ENCODE measurements at regions of chr4 and their contacts with region 1.

Region 1: DNA sequence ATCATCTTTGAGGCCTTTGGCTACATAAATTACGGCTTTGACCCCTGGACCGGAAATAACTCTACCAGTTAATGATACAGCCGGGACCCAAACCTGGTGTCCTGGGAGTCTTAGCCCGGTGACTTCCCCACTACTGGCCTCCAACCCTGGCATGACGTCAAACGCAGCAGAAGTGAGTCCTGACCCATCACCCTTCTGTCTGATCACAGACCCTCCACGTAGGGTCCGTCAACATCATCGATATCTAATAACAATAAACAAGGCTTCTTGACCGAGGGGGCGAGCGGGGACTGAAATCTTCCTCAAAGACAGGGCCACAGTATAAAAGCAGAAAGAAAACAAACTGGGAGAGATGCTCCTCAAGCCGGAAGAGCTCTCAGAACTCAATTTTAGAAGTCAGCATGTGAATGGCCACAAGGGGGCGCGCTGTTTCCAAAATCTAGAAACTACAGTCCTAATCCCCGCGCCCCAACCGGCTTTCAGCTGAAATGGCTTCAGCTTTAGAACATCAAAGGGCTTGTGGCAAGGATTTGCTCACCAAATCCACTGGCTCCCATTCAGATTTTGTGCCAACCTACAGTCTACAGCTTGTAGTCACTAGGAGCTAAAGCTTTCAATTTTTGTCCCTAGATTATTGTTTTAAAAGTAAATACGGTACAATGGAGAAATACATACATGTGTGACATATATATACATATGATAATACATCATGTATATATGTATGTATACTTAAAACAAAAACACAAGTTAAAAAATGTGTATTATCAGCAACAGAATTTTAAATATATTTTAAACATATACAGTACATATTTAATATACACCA is 46.4 kb upstream of the ENPP6 start:
- DNase-seq: peak; percentile 72
- CTCF ChIP-seq: peak; percentile 80

Region 2: DNA sequence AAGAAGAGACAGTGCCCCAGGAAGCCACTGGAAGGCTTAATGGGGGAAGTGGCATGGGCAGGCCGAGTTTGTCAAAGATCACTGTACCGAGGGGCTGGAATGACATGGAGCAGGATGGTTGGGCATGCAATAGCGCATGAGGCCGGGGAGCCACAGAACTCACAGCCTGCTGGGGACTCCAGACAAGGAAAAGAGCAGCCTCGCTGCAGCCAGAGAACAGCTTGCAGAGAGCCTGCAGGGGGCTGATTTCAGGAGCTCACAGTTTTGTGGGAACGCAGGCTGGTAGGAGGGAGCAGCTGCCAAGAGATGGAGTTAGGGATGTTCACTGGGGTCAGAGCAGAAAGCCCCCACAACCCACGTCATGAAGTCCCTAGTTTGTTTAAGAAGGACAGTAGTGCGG is 313.6 kb before region 1 on chr4:
- CTCF ChIA-PET with region 1: no interaction called
- POLR2A ChIA-PET with region 1: no interaction called
- DNase-seq: no peak
- CTCF ChIP-seq: no peak

Region 3: GRCh38 chr4:184039963-184040383 is 224.1 kb before region 1 on chr4:
- CTCF ChIA-PET with region 1: no interaction called
- POLR2A ChIA-PET with region 1: no interaction called
- DNase-seq: peak; percentile 27
- CTCF ChIP-seq: no peak

Region 4: DNA sequence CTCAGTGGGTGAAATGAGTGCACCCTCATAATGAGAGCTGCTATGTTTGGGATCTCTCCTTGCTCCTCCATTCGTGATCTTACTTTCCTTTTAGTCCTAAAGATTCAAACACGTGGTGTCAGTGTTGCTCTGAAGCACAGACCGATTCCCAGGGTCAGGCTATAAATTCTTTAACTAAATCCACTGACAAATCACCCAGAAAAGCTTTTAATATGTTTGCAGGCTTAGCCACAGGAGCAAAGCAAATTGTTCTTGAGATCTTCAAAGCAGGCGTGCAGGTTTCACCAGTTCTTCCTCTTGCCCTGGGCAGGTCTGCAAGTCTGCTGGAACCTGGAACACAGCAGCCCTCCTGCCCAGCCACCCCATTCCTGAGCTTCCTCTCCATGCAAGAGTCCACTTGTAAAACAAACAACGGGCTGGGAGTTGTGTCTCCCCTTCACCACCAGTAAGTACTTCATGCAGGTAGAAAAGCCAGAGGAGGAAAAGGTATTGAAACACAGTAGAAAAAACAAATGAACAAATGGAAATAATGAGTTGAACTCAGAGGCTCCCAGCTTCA is 23.7 kb after region 1 on chr4:
- CTCF ChIA-PET with region 1: interaction called, 168 read pairs
- POLR2A ChIA-PET with region 1: interaction called, 8 read pairs
- DNase-seq: no peak
- CTCF ChIP-seq: peak; percentile 12

Region 5: DNA sequence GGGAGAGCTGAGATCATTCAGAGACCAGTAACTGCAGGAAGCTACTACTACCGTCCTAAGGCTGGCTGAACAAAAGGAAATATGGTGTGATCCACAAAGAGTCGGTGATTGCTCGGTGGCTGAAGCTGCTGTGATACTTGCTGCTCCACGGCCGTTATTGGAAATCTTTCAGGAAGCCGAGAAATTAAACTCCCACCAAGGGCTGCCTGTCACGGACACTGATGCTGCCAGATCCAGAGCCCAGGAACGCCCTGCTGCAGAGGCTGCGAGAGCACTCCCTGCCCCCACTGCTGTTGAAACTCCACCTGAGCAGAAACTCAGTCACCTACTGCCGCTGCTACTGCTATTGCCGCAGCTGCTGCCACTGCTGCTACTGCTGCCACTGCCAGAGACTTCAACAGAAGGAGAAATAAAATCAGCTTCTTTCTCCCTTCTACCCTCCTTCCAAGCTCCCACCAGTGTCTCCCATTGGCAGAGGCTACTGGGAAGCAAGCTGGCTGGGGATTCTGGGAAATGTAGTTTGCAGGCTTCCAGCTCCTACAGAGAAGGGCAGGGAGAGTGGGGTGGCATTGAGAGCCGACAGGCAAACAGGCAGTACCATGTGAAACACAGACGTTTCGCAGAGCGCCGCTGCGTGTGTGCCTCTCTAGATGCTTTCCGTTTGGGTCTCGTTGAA is 79.5 kb after region 1 on chr4:
- CTCF ChIA-PET with region 1: interaction called, 13 read pairs
- POLR2A ChIA-PET with region 1: interaction called, 6 read pairs
- DNase-seq: no peak
- CTCF ChIP-seq: no peak

Region 6: DNA sequence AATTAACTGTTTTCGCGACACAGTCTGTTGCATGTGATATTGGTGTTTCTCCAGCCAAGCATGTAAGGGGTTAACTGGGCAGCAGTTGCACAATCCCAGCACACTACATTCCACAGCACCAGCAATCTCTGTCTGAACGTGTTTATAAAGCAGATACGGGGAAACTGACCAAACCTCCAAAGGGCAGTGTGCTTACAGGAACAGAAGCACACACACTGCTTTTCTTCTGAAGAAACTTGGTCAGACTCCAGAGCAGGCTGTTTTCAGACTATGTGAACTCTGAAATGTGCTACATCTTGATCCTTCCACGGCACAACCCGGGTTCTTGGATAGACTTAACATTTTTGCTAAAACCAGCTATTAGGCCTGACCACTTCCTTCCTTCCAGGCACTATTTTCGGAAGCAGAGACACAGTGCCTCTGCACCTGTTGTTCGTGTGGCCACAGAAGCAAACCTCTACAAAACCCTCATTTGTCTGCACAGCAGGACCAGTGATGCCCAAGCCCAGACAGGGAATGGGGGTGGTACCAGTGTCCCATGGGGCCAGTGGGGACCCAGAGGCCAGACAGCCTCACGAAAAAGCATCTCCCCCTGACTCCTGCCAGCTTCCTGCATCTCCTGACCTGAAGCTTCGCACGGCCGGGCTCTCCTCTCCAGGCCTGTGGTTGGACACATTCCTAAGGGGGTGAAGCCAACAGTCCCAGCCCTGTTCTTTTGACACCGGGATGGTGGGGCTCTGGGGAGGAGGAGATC is 120.1 kb after region 1 on chr4:
- CTCF ChIA-PET with region 1: interaction called, 15 read pairs
- POLR2A ChIA-PET with region 1: interaction called, 3 read pairs
- DNase-seq: peak; percentile 46
- CTCF ChIP-seq: no peak

Region 7: GRCh38 chr4:184538023-184538599 is 274.0 kb after region 1 on chr4:
- CTCF ChIA-PET with region 1: interaction called, 31 read pairs
- POLR2A ChIA-PET with region 1: interaction called, 4 read pairs
- DNase-seq: peak; percentile 76
- CTCF ChIP-seq: peak; percentile 70